ENCODE measurements at regions of chr22 and their contacts with region 1.

Region 1: GRCh38 chr22:45450921-45451651 is 37.6 kb downstream of the RIBC2 start:
- DNase-seq: no peak
- H3K4me3 ChIP-seq: no peak overlapping the region
- H3K27ac ChIP-seq: no peak overlapping the region
- H3K4me1 ChIP-seq: no peaks in the 10 kb centered on the region
- H3K27me3 ChIP-seq: peaks cover 2% of the 10 kb centered on the region
- CTCF ChIP-seq: no peak

Region 2: GRCh38 chr22:45389521-45389920 is 61.6 kb before region 1 on chr22:
- CTCF ChIA-PET with region 1: no interaction called
- dilution Hi-C with region 1: no loop called
- in situ Hi-C with region 1: no loop called
- intact Hi-C with region 1: no loop called
- DNase-seq: no peak
- H3K4me3 ChIP-seq: no peak overlapping the region
- H3K27ac ChIP-seq: no peak overlapping the region
- H3K4me1 ChIP-seq: no peaks in the 10 kb centered on the region
- H3K27me3 ChIP-seq: no peaks in the 10 kb centered on the region
- CTCF ChIP-seq: no peak

Region 3: GRCh38 chr22:45462034-45462690 is 11.1 kb after region 1 on chr22:
- CTCF ChIA-PET with region 1: no interaction called
- dilution Hi-C with region 1: no loop called
- in situ Hi-C with region 1: no loop called
- intact Hi-C with region 1: no loop called
- DNase-seq: no peak
- H3K4me3 ChIP-seq: no peak overlapping the region
- H3K27ac ChIP-seq: no peak overlapping the region
- H3K4me1 ChIP-seq: no peaks in the 10 kb centered on the region
- H3K27me3 ChIP-seq: no peaks in the 10 kb centered on the region
- CTCF ChIP-seq: no peak

Region 4: GRCh38 chr22:45511847-45512281 is 60.8 kb after region 1 on chr22:
- CTCF ChIA-PET with region 1: no interaction called
- dilution Hi-C with region 1: loop called (anchors 10 kb)
- in situ Hi-C with region 1: no loop called
- intact Hi-C with region 1: no loop called
- DNase-seq: no peak
- H3K4me3 ChIP-seq: no peak overlapping the region
- H3K27ac ChIP-seq: no peak overlapping the region
- H3K4me1 ChIP-seq: peaks cover 12% of the 10 kb centered on the region
- H3K27me3 ChIP-seq: no peaks in the 10 kb centered on the region
- CTCF ChIP-seq: no peak

Measured in mammary epithelial cell (primary cell).